ENCODE measurements at regions of chr1 and their contacts with region 1.

Region 1: GRCh38 chr1:24415334-24415909 is at the start of gene NIPAL3:
- DNase-seq: peak; percentile 99
- H3K4me3 Mint-ChIP-seq: peak within 1 kb of the TSS; percentile 93
- H3K27ac Mint-ChIP-seq: peak within 1 kb of the TSS; percentile 98
- H3K4me1 Mint-ChIP-seq: peaks cover 45% of the 10 kb centered on the region
- H3K27me3 Mint-ChIP-seq: no peaks in the 10 kb centered on the region
- CTCF ChIP-seq: peak; percentile 84
- total RNA-seq, gene NIPAL3: 47.7 and 55.8 TPM in 2 replicates

Region 2: GRCh38 chr1:23539698-23540266 is 875.6 kb before region 1 on chr1:
- CTCF ChIA-PET with region 1: no interaction called
- POLR2A ChIA-PET with region 1: no interaction called
- intact Hi-C with region 1: no loop called
- DNase-seq: peak; percentile 90
- H3K4me3 Mint-ChIP-seq: no peak overlapping the region
- H3K27ac Mint-ChIP-seq: no peak overlapping the region
- H3K4me1 Mint-ChIP-seq: peaks cover 18% of the 10 kb centered on the region
- H3K27me3 Mint-ChIP-seq: no peaks in the 10 kb centered on the region
- CTCF ChIP-seq: peak; percentile 91

Region 3: DNA sequence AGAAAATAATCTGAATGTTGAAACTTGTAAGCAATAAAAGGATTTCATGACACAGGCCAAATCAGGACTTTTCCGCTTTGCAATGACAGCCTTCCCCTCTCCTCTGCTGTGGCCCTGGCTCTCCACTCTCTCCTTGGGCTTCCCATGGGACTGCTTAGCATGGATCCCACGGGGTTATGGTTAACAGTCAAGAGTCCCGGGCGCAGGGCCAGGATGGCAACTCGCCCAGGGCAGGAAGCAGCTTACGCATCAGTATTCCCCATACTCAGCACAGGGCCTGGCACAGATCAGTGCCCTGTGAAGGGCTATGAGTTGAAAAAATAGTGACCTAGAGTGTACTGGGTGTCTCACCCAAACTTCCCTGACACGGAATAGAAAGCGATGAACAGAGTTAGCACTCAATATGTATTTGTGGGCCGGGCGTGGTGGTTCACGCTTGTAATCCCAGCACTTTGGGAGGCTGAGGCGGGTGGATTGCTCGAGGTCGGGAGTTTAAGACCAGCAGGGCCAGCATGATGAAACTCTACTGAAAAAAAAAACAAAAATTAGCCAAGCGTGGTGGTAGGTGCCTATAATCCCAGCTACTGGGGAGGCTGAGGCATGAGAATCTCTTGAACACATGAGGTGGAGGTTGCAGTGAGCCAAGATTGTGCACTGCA is 125.4 kb before region 1 on chr1:
- CTCF ChIA-PET with region 1: interaction called, 3 read pairs
- POLR2A ChIA-PET with region 1: interaction called, 28 read pairs
- intact Hi-C with region 1: no loop called
- DNase-seq: peak; percentile 99
- H3K4me3 Mint-ChIP-seq: peak overlapping the region; percentile 44
- H3K27ac Mint-ChIP-seq: peak overlapping the region; percentile 94
- H3K4me1 Mint-ChIP-seq: peaks cover 55% of the 10 kb centered on the region
- H3K27me3 Mint-ChIP-seq: no peaks in the 10 kb centered on the region
- CTCF ChIP-seq: no peak

Region 4: DNA sequence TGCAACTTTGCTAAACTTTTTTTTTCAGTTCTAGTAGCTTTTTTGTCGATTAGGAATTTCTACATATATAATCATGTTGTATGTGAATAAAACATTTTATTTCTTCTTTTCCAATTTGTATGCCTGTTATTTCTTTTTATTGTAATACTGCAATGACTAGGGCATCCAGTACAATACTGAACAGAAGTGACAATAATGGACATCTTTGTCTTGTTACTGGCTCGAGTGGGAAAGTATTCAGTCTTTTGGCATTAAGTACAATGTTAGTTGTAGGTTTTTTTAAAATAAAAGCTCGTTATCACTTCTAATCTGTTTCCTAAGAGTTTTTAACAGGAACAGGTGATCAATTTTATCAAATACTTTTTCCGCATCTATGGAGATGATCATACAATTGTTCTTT is 11.6 kb before region 1 on chr1:
- CTCF ChIA-PET with region 1: interaction called, 6 read pairs
- POLR2A ChIA-PET with region 1: interaction called, 27 read pairs
- intact Hi-C with region 1: no loop called
- DNase-seq: no peak
- H3K4me3 Mint-ChIP-seq: no peak overlapping the region
- H3K27ac Mint-ChIP-seq: no peak overlapping the region
- H3K4me1 Mint-ChIP-seq: no peaks in the 10 kb centered on the region
- H3K27me3 Mint-ChIP-seq: no peaks in the 10 kb centered on the region
- CTCF ChIP-seq: no peak

Region 5: GRCh38 chr1:24502709-24503058 is 87.3 kb after region 1 on chr1 and contains the start of gene RCAN3:
- CTCF ChIA-PET with region 1: interaction called, 4 read pairs
- POLR2A ChIA-PET with region 1: interaction called, 42 read pairs
- intact Hi-C with region 1: loop called (anchors 5 kb)
- DNase-seq: peak; percentile 81
- H3K4me3 Mint-ChIP-seq: peak within 1 kb of the TSS; percentile 76
- H3K27ac Mint-ChIP-seq: peak within 1 kb of the TSS; percentile 59
- H3K4me1 Mint-ChIP-seq: peaks cover 16% of the 10 kb centered on the region
- H3K27me3 Mint-ChIP-seq: no peaks in the 10 kb centered on the region
- CTCF ChIP-seq: no peak
- total RNA-seq, gene RCAN3: 6.1 and 7.1 TPM in 2 replicates

Region 6: GRCh38 chr1:24526940-24527542 is 111.6 kb after region 1 on chr1:
- CTCF ChIA-PET with region 1: no interaction called
- POLR2A ChIA-PET with region 1: no interaction called
- intact Hi-C with region 1: loop called (anchors 2 kb)
- DNase-seq: peak; percentile 38
- H3K4me3 Mint-ChIP-seq: no peak overlapping the region
- H3K27ac Mint-ChIP-seq: no peak overlapping the region
- H3K4me1 Mint-ChIP-seq: no peaks in the 10 kb centered on the region
- H3K27me3 Mint-ChIP-seq: no peaks in the 10 kb centered on the region
- CTCF ChIP-seq: peak; percentile 49

Region 7: DNA sequence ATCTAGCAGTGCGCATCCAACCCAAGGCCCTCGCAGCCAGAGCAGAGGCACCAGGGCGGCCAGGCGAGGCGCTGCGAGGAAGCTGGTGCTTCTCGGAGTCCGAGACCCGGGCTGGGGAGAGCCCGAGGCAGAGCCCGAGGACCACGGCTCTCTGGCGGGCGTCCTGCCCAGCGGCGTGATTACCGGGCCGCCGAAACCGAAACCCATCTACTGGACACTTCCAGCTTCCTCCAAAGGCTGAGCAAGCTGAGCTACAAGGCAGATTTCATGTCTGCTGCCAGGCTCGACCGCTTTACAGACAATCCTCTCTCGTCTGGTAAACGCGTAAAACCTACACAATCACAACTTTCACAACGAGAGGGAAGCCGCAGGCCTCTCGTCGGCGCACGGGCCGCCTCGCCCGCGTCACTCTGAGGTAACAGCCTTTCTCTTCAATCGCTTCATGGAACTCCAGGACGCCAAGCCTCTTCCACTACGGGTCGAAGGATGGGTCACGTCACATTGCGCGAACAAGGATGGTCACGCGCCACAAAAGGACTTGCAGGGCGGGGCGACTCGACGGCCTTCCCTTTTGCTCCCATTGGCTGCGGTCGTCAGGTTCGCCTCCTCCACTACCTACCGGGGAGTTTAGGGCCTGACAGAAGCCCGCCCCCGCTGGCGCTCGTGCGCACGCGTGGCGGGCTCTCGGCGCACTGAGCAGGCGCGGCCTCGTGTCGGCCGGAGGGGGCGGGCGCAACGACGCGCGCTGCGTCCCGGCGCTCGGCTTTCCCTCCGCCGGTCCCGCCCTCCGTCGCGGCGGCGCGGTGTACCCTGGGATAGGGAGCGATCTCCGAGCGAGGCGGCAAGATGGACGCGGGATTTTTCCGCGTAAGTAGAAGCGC is 227.3 kb after region 1 on chr1 and contains the start of gene SRRM1:
- CTCF ChIA-PET with region 1: interaction called, 4 read pairs
- POLR2A ChIA-PET with region 1: interaction called, 66 read pairs
- intact Hi-C with region 1: loop called (anchors 5 kb)
- DNase-seq: peak; percentile 100
- H3K4me3 Mint-ChIP-seq: peak within 1 kb of the TSS; percentile 98
- H3K27ac Mint-ChIP-seq: peak within 1 kb of the TSS; percentile 99
- H3K4me1 Mint-ChIP-seq: peaks cover 25% of the 10 kb centered on the region
- H3K27me3 Mint-ChIP-seq: no peaks in the 10 kb centered on the region
- CTCF ChIP-seq: no peak
- total RNA-seq, gene SRRM1: 154 and 171 TPM in 2 replicates

Region 8: GRCh38 chr1:24694380-24694843 is 279.0 kb after region 1 on chr1:
- CTCF ChIA-PET with region 1: no interaction called
- POLR2A ChIA-PET with region 1: no interaction called
- intact Hi-C with region 1: no loop called
- DNase-seq: no peak
- H3K4me3 Mint-ChIP-seq: no peak overlapping the region
- H3K27ac Mint-ChIP-seq: no peak overlapping the region
- H3K4me1 Mint-ChIP-seq: no peaks in the 10 kb centered on the region
- H3K27me3 Mint-ChIP-seq: no peaks in the 10 kb centered on the region
- CTCF ChIP-seq: no peak

Measured in MCF 10A (cell line).